Activated T-helper 2 cell treated with anti-CD3 and anti-CD28 coated beads, Interferon-gamma antibody, Interleukin-2, Interleukin-4, amounts not matched to agents 10 μg/mL and 5 μg/mL and 100 μg/mL, durations not matched to agents 14 hours and 24 hours and 36 hours (primary cell): ENCODE measurements at regions of chr18 and their contacts with region 1.

Region 1: DNA sequence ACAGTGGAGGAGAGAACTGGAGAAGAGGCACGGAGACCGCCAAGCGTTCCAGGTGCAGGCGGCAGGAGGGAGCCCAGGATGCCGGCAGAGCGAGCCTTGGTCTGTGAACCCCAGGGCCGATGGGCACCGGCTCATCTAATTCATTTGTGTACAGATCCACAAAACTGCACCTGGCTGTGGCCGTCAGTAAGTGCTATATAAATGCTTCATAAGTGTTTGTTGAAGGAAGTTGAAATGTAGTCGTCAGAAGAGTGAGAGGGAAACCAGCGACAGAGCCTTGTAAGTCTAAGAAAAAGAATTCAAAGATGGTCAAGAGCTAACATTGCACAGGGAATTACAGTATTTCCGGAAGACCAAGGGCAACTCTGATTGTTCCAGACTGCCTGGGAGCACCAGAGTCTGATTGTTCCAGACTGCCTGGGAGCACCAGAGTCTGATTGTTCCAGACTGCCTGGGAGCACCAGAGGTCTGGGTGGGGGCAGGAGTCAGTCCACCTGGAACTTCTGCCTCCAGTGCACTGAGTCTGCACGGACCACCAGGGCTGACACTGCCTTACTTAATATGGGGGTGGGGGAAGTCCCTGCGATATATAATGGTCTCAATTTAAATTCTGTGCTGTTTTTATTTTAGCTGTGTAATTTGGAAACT is 112.3 kb downstream of the BCL2 start:
- DNase-seq: no peak
- H3K4me3 Mint-ChIP-seq: peak overlapping the region; percentile 87
- H3K27ac Mint-ChIP-seq: peak overlapping the region; percentile 87
- H3K4me1 Mint-ChIP-seq: peaks cover 81% of the 10 kb centered on the region
- H3K27me3 Mint-ChIP-seq: no peaks in the 10 kb centered on the region

Region 2: GRCh38 chr18:63098018-63098981 is 109.0 kb before region 1 on chr18:
- intact Hi-C with region 1: loop called (anchors 2 kb)
- DNase-seq: peak; percentile 65
- H3K4me3 Mint-ChIP-seq: peak overlapping the region; percentile 47
- H3K27ac Mint-ChIP-seq: peak overlapping the region; percentile 80
- H3K4me1 Mint-ChIP-seq: peaks cover 49% of the 10 kb centered on the region
- H3K27me3 Mint-ChIP-seq: peaks cover 31% of the 10 kb centered on the region

Region 3: DNA sequence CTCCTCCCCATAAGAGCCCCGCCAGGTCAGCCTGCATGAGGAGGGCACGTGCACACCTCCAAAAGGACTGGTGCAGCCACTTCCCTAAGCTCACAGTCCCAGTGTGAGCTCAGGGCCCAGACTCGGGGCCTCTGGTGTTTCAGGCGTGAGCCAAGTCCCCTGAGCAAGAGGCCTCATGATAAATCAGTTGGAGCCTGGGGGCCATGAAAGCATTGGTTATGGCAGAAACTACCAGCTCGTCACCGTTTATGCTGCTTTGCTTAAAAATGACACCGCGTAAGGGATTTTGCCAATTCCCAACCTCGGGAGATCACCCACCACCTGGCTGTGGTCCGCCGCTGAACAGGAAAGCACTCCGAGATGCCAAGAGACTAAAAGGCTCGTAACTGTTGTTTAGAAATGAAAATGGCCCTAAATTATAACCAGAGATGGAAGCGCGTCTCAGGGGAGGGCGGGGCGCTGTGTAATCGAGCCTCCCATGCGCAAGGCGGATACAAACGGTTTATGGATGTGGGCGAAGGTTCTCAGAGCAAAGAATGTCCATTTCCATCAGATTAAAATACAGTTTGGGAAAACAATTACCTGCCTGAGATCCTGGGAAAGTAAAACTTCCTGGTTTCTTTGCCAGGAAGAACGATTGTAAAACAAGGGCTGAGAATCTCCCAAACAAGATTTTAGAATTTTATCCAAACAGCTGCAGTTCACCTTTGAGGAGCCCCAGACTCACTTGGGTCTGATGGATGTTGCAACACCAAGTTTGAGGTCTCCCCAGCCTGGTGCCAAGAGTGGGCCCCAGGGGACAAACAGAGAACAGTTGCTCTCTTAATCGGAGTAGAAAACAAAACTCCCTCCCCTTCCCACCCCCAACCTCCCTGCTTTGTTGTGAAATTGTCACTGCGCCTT is 29.1 kb before region 1 on chr18:
- intact Hi-C with region 1: no loop called
- DNase-seq: no peak
- H3K4me3 Mint-ChIP-seq: no peak overlapping the region
- H3K27ac Mint-ChIP-seq: peak overlapping the region; percentile 44
- H3K4me1 Mint-ChIP-seq: peaks cover 41% of the 10 kb centered on the region
- H3K27me3 Mint-ChIP-seq: no peaks in the 10 kb centered on the region

Region 4: GRCh38 chr18:63234841-63235240 is 27.6 kb after region 1 on chr18:
- intact Hi-C with region 1: loop called (anchors 2 kb)
- DNase-seq: no peak
- H3K4me3 Mint-ChIP-seq: peak overlapping the region; percentile 17
- H3K27ac Mint-ChIP-seq: peak overlapping the region; percentile 80
- H3K4me1 Mint-ChIP-seq: peaks cover 71% of the 10 kb centered on the region
- H3K27me3 Mint-ChIP-seq: no peaks in the 10 kb centered on the region

Region 5: GRCh38 chr18:63451799-63452660 is 244.8 kb after region 1 on chr18:
- intact Hi-C with region 1: no loop called
- DNase-seq: no peak
- H3K4me3 Mint-ChIP-seq: no peak overlapping the region
- H3K27ac Mint-ChIP-seq: no peak overlapping the region
- H3K4me1 Mint-ChIP-seq: no peaks in the 10 kb centered on the region
- H3K27me3 Mint-ChIP-seq: no peaks in the 10 kb centered on the region